H1 (cell line): ENCODE measurements at regions of chr3 and their contacts with region 1.

Region 1: GRCh38 chr3:101588616-101589015 is 14.6 kb downstream of the PCNP start:
- DNase-seq: no peak
- H3K4me3 ChIP-seq: no peak overlapping the region
- H3K27ac ChIP-seq: no peak overlapping the region
- H3K4me1 ChIP-seq: no peaks in the 10 kb centered on the region
- H3K27me3 ChIP-seq: no peaks in the 10 kb centered on the region
- CTCF ChIP-seq: no peak
- EP300 ChIP-seq: no peak
- POLR2A ChIP-seq: no peak
- RAD21 ChIP-seq: no peak

Region 2: GRCh38 chr3:101573449-101574387 is 14.9 kb before region 1 on chr3 and contains the start of gene PCNP:
- CTCF ChIA-PET with region 1: interaction called, 5 read pairs
- POLR2A ChIA-PET with region 1: interaction called, 15 read pairs
- DNase-seq: peak; percentile 90 to 98
- H3K4me3 ChIP-seq: peak within 1 kb of the TSS; percentile 82 to 98 (median 91)
- H3K27ac ChIP-seq: peak within 1 kb of the TSS; percentile 96
- H3K4me1 ChIP-seq: peaks cover 0 to 3% (median 0%) of the 10 kb centered on the region in 4 experiments; a peak in 2 of 7 replicates
- H3K27me3 ChIP-seq: no peaks in the 10 kb centered on the region; a peak in 1 of 7 replicates
- CTCF ChIP-seq: peak in 2 of 3 experiments; percentile 58 to 80; a peak in 3 of 4 replicates
- EP300 ChIP-seq: peak in 1 of 2 experiments; percentile 53; a peak in 1 of 3 replicates
- POLR2A ChIP-seq: peak; percentile 85 to 93
- RAD21 ChIP-seq: peak; percentile 68 to 73
- total RNA-seq, gene PCNP: 188 and 192 TPM in 2 replicates

Region 3: DNA sequence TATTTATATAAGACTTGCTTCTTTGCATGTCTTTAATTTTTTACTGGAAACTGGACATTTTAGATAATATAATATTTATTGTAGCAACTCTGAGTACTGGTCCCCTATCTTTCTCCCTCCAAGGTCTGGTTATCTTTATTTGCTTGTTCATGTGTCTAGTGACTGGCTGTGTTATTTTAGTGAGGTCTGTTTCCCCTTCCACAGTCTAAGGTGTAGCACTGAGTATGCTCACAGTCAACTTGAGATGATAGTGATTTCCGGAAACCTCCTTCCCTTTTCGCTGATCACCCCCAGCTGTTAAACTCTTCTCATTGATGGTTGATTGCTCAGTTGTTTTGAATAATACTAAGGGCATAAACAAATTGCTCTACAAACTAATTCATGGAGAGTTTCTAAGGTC is 22.4 kb after region 1 on chr3:
- CTCF ChIA-PET with region 1: no interaction called
- POLR2A ChIA-PET with region 1: no interaction called
- DNase-seq: peak in 1 of 2 experiments; percentile 10
- H3K4me3 ChIP-seq: no peak overlapping the region
- H3K27ac ChIP-seq: no peak overlapping the region
- H3K4me1 ChIP-seq: no peaks in the 10 kb centered on the region
- H3K27me3 ChIP-seq: no peaks in the 10 kb centered on the region
- CTCF ChIP-seq: no peak
- EP300 ChIP-seq: no peak
- POLR2A ChIP-seq: no peak
- RAD21 ChIP-seq: no peak